Prostate gland (tissue), 2 donors: ENCODE measurements at regions of chr10 and their contacts with region 1.

Region 1: GRCh38 chr10:86710987-86711512 is 42.7 kb downstream of the LDB3 start:
- DNase-seq: peak; percentile 84
- H3K4me3 ChIP-seq: peak overlapping the region; percentile 81 to 86
- H3K27ac ChIP-seq: peak overlapping the region; percentile 96 to 97
- H3K4me1 ChIP-seq: no peaks in the 10 kb centered on the region
- H3K27me3 ChIP-seq: no peaks in the 10 kb centered on the region
- CTCF ChIP-seq: peak; percentile 81 to 98 (median 91)
- POLR2A ChIP-seq: peak; percentile 72

Region 2: GRCh38 chr10:86644152-86644793 is 66.8 kb before region 1 on chr10:
- intact Hi-C with region 1: no loop called
- DNase-seq: peak; percentile 2
- H3K4me3 ChIP-seq: no peak overlapping the region
- H3K27ac ChIP-seq: no peak overlapping the region
- H3K4me1 ChIP-seq: peaks cover 3% of the 10 kb centered on the region
- H3K27me3 ChIP-seq: no peaks in the 10 kb centered on the region
- CTCF ChIP-seq: no peak
- POLR2A ChIP-seq: no peak

Region 3: GRCh38 chr10:86899670-86900276 is 188.7 kb after region 1 on chr10:
- intact Hi-C with region 1: loop called (anchors 2 kb)
- DNase-seq: peak; percentile 78
- H3K4me3 ChIP-seq: no peak overlapping the region
- H3K27ac ChIP-seq: peak overlapping the region in 1 of 2 donors; percentile 18
- H3K4me1 ChIP-seq: peaks cover 8% of the 10 kb centered on the region
- H3K27me3 ChIP-seq: no peaks in the 10 kb centered on the region
- CTCF ChIP-seq: peak; percentile 37 to 85 (median 74)
- POLR2A ChIP-seq: no peak